ENCODE measurements at regions of chr9 and their contacts with region 1.

Region 1: DNA sequence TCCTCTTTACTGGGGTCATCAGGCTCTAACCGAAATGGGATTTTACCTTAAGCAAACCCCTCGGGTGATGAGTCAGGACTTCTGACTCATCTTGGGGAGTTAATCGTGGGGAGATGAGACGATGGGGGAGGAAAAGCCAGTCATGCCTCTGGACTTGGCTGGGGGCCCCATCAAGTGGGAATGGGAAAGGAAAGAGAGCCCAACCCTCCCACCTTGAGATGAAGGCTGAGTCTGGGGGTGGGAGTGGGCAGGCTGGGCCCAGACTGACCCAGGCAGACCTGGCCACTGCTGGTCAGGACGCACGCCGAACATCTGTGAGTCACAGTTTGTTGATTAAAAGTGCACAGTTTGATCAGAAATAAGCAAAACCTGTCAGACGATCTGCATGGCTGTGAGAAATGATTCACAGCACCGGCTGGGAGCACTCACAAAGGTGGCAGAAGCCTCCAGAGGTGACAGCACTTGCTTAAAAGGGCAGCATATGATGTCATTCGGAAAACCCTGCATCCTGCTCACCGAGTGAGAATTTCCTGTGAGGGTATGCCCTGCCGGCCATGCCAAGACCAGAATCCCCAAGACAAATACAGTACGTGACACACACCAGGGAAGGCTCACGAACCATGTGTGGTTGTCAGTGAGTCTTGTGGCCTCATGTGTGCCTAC is 50.0 kb upstream of the SLC25A51 start:
- DNase-seq: peak; percentile 69
- H3K4me3 Mint-ChIP-seq: peak overlapping the region; percentile 65
- H3K27ac Mint-ChIP-seq: peak overlapping the region; percentile 97
- H3K4me1 Mint-ChIP-seq: peaks cover 20% of the 10 kb centered on the region
- H3K27me3 Mint-ChIP-seq: no peaks in the 10 kb centered on the region

Region 2: DNA sequence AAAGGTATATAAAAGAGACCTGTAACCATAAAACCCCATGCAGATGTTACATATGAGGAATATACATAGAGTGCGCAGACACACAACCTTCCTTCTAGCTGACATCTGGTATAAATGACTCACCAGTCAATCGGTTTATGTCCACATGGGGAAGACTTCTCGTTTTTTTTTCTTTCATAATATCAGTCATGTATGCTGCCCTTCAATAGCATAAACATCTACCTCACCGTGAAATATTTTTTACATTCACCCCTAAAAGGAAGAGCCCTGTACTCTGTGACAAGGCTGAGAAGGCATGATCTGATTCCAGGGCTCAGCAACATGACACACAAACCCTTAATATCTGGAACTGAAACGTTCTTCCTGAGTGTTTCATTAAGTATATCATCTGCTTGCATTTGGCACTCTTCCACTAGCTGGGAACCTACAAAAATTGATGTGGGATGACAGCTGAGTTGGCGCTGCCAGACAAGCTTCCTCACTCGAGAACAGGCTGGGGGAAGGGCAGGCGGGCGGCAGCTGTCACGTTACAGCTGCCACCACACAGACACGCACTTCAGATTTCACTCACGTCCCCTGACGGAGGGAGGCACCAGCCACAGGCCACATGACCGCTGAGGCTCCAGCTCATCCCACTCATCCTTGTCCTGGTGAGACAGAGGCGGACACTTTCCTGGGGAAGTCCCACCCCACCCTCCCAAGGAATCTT is 40.9 kb after region 1 on chr9:
- intact Hi-C with region 1: loop called (anchors 1 kb)
- DNase-seq: peak; percentile 64
- H3K4me3 Mint-ChIP-seq: peak overlapping the region; percentile 63
- H3K27ac Mint-ChIP-seq: peak overlapping the region; percentile 80
- H3K4me1 Mint-ChIP-seq: peaks cover 19% of the 10 kb centered on the region
- H3K27me3 Mint-ChIP-seq: no peaks in the 10 kb centered on the region

Measured in activated CD4-positive, alpha-beta T cell treated with anti-CD3 and anti-CD28 coated beads, Interleukin-2, amount 10 ng/mL, durations not matched to agents 24 days and 14 days (primary cell).